Sciatic nerve (tissue), 2 donors: ENCODE measurements at regions of chr20 and their contacts with region 1.

Region 1: DNA sequence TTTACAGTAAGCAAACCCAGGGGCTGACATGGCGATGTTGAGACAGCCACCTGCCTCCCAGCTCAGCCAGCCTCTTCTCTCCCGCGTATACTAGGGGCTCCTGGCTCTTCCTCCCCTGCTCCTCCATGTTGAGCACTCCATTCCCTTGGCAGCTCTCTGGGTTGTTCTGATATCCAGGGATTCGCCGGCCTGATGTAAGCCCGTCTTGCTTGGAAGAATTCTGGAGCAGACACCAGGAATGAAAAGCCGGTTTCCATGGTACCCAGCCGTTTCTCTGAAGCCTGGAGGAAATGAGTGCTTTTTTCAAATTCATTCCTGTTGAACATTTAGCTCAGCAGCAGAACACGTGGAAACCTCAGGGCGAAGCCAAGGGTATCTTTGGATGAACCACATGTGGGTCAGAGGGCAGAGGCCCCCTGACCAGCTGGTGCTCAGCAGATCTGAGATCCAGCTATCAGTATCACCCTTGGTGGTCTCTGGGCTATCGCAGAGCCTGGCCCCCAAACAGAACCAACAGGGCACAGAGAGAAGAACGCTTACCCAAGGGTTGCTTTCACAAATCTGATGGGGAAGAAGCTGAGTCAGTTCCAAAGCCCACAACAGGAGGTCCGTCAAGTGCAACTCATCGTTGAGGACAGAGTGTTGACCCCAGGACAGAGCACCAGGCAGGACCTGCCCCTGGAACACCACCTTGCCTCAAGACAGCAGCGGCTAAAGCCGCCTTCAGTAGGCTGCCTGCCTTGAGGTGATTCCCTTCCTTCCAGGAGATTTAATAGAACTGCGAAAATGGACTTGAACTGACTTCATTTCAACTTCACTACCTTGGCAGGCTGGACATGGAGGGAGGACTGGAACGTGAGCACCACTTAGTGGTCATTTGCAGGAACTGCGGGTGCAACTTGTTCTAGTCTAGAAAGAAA is 96.1 kb upstream of the RIN2 start:
- DNase-seq: peak; percentile 81
- ATAC-seq: peak; percentile 92

Region 2: DNA sequence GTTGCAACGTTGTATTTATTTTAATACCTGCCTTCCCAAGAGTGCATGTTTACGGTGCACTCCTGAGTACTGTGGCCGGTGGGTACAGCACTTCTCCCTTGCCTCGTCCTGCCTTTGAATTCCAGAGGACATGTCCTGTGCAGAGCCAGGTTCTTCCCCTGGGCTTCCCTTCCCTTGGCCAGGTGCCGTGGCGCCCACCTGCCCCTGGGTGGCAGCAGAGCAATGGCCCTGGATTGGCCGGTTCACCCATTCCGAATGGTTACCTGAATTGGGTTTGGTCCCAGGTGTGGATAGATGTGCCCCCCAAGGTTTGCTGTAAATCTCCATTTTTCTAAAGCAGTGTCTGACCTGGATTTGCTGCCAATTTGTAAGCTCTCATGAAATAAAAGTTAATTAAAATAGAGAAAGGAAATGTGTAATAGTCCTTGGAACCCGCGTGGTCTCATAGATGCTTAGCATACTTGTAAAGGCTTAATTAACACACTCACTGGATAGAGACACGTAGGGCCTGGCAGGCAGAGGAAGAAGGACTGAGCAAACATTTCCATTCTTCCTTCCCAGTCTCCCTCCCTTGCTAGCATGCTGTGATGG is 1033.6 kb before region 1 on chr20:
- intact Hi-C with region 1: loop called (anchors 10 kb)
- DNase-seq: no peak
- ATAC-seq: no peak

Region 3: DNA sequence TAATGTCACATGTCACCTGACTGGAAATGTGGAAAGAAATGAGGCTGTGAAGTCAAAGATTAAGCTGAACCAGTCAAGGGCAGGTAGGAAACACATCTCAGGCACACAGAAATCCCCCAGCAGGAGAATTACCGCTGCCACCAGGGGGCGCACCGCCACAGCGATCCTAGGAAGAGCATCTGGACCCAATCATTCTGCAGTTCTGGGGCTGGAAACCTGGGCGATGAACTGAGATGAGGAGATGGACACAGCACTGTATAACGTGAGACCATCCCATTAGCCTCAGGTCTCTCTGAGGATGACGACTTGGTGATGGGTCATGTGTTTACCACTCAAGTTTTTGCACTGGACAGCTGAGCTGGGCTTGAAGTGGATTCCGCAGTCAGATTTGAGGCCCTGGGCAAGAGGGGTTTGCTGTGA is 456.0 kb before region 1 on chr20:
- intact Hi-C with region 1: loop called (anchors 2 kb)
- DNase-seq: peak; percentile 90
- ATAC-seq: peak; percentile 76

Region 4: DNA sequence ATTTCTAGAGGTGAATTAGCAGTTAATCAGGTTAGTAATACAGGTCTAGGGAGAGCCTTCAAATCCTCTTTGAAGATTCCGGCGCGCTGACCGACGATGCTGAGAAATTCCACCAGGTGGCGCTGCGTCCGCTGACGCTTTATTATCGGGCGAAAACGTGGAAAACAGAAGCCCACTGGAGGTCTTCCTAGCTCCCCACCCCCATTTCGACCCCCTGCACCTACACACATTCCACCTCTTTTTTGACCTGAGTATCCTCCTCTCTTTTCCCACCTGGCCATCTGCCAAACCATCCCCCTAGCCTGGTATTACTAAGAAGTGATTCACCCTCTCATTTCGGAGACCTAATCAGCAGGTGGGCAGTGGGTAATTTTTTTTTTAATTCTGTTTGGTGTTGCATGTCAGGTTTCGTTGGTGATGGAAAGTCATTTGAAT is 30.7 kb after region 1 on chr20:
- intact Hi-C with region 1: no loop called
- DNase-seq: peak; percentile 78
- ATAC-seq: peak; percentile 30

Region 5: DNA sequence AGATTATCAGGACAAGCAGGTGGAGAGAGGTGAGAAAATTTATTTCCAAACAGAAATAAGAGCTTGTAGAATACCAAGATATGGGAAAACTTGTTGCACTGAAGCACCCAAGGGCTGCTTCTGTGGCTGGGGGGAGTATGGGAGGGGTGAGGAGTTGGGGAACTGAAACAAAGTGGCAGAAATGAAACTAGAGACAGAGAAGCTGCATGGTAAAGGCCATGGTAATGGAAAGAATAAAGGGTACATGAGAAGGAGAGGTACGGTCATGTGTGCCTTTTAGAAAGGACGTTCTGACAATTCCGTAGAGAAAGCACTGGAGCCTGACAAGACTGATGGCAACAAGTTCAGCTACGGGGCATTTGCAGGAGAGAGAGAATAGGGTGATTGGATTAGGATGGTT is 44.5 kb after region 1 on chr20:
- intact Hi-C with region 1: no loop called
- DNase-seq: no peak
- ATAC-seq: peak; percentile 71